ENCODE measurements at regions of chrX and their contacts with region 1.

Region 1: GRCh38 chrX:124388562-124388961 is 42.2 kb downstream of the SH2D1A start:
- DNase-seq: no peak
- ATAC-seq: peak; percentile 91
- H3K4me3 ChIP-seq: no peak overlapping the region
- H3K27ac ChIP-seq: no peak overlapping the region
- H3K4me1 ChIP-seq: peaks cover 3% of the 10 kb centered on the region; the same call in 1 of the 2 replicates
- H3K27me3 ChIP-seq: no peaks in the 10 kb centered on the region
- CTCF ChIP-seq: peak; percentile 62 to 73 (median 65)
- EP300 ChIP-seq: no peak
- POLR2A ChIP-seq: no peak
- RAD21 ChIP-seq: peak; percentile 68

Region 2: DNA sequence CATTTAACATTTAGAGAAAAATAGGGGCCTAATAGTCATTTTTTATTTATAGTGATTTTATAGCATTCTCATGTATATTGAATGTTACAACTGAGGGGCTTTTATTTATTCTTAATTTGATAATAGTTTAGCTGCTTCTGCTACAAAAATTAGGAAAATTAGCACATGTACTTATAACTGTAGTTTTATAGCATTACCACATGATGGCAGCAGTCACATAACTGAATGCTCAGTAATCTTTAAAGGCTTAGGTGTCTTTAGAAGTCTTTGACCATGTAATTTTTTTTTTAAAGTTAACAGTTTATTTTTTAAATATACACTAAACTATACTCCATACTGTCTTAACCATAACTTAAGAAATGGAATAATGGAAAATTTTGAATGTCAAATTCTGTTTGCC is 290.5 kb before region 1 on chrX:
- CTCF ChIA-PET with region 1: no interaction called
- POLR2A ChIA-PET with region 1: no interaction called
- RAD21 ChIA-PET with region 1: no interaction called
- SMC1A ChIA-PET with region 1: no interaction called
- in situ Hi-C with region 1: no loop called
- intact Hi-C with region 1: loop called (anchors 10 kb)
- DNase-seq: no peak
- ATAC-seq: peak; percentile 65
- H3K4me3 ChIP-seq: no peak overlapping the region
- H3K27ac ChIP-seq: no peak overlapping the region
- H3K4me1 ChIP-seq: no peaks in the 10 kb centered on the region
- H3K27me3 ChIP-seq: no peaks in the 10 kb centered on the region
- CTCF ChIP-seq: peak; percentile 36 to 50 (median 42); a peak in 4 of 6 replicates
- EP300 ChIP-seq: no peak
- POLR2A ChIP-seq: no peak
- RAD21 ChIP-seq: peak; percentile 47

Region 3: GRCh38 chrX:124211312-124211942 is 177.1 kb before region 1 on chrX:
- CTCF ChIA-PET with region 1: interaction called, 3 read pairs
- POLR2A ChIA-PET with region 1: no interaction called
- RAD21 ChIA-PET with region 1: interaction called, 3 read pairs
- SMC1A ChIA-PET with region 1: interaction called, 3 read pairs
- in situ Hi-C with region 1: no loop called
- intact Hi-C with region 1: loop called (anchors 5 kb)
- DNase-seq: no peak
- ATAC-seq: peak; percentile 95
- H3K4me3 ChIP-seq: no peak overlapping the region
- H3K27ac ChIP-seq: no peak overlapping the region
- H3K4me1 ChIP-seq: peaks cover under 1% of the 10 kb centered on the region; the same call in 1 of the 2 replicates
- H3K27me3 ChIP-seq: no peaks in the 10 kb centered on the region
- CTCF ChIP-seq: peak; percentile 60 to 67 (median 61); a peak in 5 of 6 replicates
- EP300 ChIP-seq: no peak
- POLR2A ChIP-seq: no peak
- RAD21 ChIP-seq: peak; percentile 76

Region 4: DNA sequence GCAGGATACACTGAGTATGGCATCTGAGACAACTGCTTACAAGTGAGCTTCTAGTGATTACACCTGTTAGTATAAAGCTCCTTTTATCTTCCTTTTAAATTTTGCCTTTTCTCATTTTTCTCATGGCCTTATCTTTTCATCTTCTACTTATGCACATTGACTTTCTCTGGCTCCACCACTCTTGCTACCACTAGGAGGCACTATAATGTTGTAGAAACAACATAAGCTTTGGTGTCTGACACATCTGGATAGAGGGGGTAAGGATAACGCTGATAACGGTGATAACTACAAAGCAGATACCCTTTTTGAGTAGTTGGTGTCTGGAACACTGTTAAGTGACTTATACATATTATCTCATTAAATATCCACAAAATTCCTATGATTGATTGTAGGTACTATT is 743.7 kb after region 1 on chrX:
- CTCF ChIA-PET with region 1: interaction called, 11 read pairs
- POLR2A ChIA-PET with region 1: no interaction called
- RAD21 ChIA-PET with region 1: interaction called, 8 read pairs
- SMC1A ChIA-PET with region 1: interaction called, 7 read pairs
- in situ Hi-C with region 1: no loop called
- intact Hi-C with region 1: no loop called
- DNase-seq: no peak
- ATAC-seq: peak; percentile 65; the same call in 2 of the 3 replicates
- H3K4me3 ChIP-seq: no peak overlapping the region
- H3K27ac ChIP-seq: no peak overlapping the region
- H3K4me1 ChIP-seq: no peaks in the 10 kb centered on the region
- H3K27me3 ChIP-seq: no peaks in the 10 kb centered on the region
- CTCF ChIP-seq: peak; percentile 25 to 53 (median 42); a peak in 4 of 6 replicates
- EP300 ChIP-seq: no peak
- POLR2A ChIP-seq: no peak
- RAD21 ChIP-seq: peak; percentile 39; the same call in 1 of the 2 replicates

Measured in GM12878 (cell line).